Prostate gland (tissue), 2 donors: ENCODE measurements at regions of chr1 and their contacts with region 1.

Region 1: GRCh38 chr1:168603501-168604110 is 27.2 kb downstream of the XCL1 start:
- DNase-seq: peak; percentile 74
- H3K4me3 ChIP-seq: no peak overlapping the region
- H3K27ac ChIP-seq: no peak overlapping the region
- H3K4me1 ChIP-seq: no peaks in the 10 kb centered on the region
- H3K27me3 ChIP-seq: no peaks in the 10 kb centered on the region
- CTCF ChIP-seq: peak; percentile 56 to 85 (median 78)
- POLR2A ChIP-seq: no peak

Region 2: DNA sequence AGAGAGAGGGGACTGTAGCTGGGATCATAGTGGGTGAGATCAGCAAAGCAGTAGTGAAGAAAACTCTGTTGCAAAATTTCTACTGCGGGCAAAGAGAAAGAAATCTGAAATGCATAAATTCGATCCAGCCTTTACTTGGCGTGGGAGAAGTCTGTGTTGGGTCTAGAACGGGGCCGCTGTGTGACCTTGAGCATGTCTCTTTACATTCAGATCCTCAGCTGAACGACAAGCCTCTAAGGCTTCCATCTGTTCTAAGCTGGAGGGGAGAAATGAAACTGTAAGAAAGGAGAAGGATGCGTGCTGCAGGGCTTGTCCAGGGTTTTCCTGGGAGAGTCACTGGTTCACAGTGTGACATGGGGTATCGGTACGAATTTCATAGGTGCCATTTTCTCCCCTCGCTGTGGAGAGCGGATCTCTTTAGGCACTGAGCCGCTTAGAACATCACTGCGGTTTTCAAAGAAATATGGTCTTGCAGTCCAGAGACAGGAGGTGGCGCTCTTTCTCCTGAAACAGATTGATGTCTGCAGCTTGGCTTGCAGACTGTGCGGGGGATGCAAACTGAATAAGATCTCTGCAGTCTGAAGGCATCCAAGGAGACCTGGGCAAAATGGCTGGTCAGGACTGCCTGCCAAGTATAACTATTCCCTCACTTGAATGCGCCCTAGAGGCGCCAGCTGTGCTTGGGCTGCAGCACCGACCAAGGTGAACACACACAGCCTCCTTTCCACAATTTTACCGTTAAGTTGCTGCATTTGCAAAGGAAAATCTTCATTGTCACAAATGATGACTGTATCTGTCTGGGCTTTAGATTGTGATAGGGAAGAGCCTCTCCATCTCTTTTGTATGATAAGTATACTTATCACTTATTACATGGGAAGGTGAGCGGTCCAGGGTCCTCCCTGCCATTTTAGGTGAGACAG is 163.9 kb before region 1 on chr1:
- intact Hi-C with region 1: no loop called
- DNase-seq: peak; percentile 53
- H3K4me3 ChIP-seq: no peak overlapping the region
- H3K27ac ChIP-seq: no peak overlapping the region
- H3K4me1 ChIP-seq: no peaks in the 10 kb centered on the region
- H3K27me3 ChIP-seq: no peaks in the 10 kb centered on the region
- CTCF ChIP-seq: peak in 3 of 4 experiments; percentile 41 to 70 (median 64)
- POLR2A ChIP-seq: no peak

Region 3: GRCh38 chr1:168664069-168664834 is 60.6 kb after region 1 on chr1:
- intact Hi-C with region 1: no loop called
- DNase-seq: no peak
- H3K4me3 ChIP-seq: no peak overlapping the region
- H3K27ac ChIP-seq: no peak overlapping the region
- H3K4me1 ChIP-seq: no peaks in the 10 kb centered on the region
- H3K27me3 ChIP-seq: no peaks in the 10 kb centered on the region
- CTCF ChIP-seq: no peak
- POLR2A ChIP-seq: no peak

Region 4: DNA sequence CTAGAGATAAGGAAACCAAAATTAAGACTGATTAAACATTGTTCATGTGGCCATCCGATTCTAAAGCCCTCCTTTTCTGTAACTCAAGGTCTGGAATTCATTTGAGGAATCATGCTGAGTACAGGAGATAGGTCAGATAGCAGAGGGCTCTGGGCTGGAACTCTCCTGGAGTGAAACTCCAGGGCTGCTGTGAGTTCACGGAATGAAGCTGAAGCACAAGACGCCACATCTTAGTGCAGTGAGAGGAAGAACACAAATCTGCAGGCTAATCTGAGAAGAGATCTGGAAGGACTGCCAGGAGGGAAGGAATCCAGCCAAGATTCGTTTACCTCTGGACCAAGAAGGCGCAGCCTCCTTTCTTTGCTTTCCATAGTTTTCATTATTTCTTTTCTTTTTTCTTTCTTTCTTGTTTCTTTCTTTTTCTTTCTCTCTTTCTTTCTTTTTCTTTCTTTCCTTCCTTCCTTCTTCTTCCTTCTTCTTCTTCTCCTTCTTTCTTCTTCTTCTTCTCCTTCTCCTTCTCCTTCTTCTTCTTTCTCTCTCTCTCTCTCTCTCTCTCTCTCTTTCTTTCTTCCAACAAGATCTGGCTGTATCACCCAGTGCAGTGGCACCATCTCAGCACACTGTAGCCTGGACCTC is 428.1 kb after region 1 on chr1:
- intact Hi-C with region 1: loop called (anchors 10 kb)
- DNase-seq: peak; percentile 72
- H3K4me3 ChIP-seq: no peak overlapping the region
- H3K27ac ChIP-seq: no peak overlapping the region
- H3K4me1 ChIP-seq: no peaks in the 10 kb centered on the region
- H3K27me3 ChIP-seq: no peaks in the 10 kb centered on the region
- CTCF ChIP-seq: no peak
- POLR2A ChIP-seq: no peak

Region 5: GRCh38 chr1:169193191-169193850 is 589.7 kb after region 1 on chr1:
- intact Hi-C with region 1: loop called (anchors 10 kb)
- DNase-seq: no peak
- H3K4me3 ChIP-seq: no peak overlapping the region
- H3K27ac ChIP-seq: no peak overlapping the region
- H3K4me1 ChIP-seq: no peaks in the 10 kb centered on the region
- H3K27me3 ChIP-seq: no peaks in the 10 kb centered on the region
- CTCF ChIP-seq: no peak
- POLR2A ChIP-seq: no peak

Region 6: DNA sequence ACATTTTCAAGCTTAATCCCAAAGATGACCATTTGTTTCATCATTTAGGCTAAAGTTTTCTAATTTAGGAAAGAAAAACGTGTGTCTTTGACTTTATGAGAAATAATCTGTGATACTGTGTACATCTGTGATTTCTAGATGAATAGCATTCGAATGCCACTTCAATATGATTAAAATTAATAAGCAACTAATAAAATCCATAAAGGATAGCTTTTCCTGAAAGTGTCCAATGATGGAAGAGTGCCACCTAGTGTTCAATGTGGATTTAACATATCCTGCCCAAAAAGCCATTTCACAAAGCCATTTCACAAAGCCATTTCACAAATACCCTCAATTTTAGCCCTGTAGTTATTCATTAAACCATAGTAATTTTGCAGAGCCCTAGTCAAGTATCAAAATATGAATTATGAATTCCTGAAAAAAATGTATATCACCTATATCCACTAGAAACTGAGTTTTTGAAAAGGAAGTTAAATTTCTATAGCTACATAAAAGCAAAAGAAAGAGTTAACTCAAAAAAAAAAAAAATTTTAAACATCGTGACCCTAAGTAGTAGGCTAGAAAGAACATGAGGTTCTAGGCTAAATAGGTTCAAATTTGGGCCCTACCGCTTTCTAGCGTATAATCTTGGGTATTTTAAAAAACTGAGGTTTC is 744.9 kb after region 1 on chr1:
- intact Hi-C with region 1: loop called (anchors 2 kb)
- DNase-seq: peak; percentile 12
- H3K4me3 ChIP-seq: no peak overlapping the region
- H3K27ac ChIP-seq: no peak overlapping the region
- H3K4me1 ChIP-seq: no peaks in the 10 kb centered on the region
- H3K27me3 ChIP-seq: no peaks in the 10 kb centered on the region
- CTCF ChIP-seq: peak; percentile 74 to 88 (median 84)
- POLR2A ChIP-seq: no peak